ENCODE measurements at regions of chr4 and their contacts with region 1.

Region 1: GRCh38 chr4:179867300-179867878 is 2375.8 kb upstream of the TENM3 start:
- DNase-seq: peak; percentile 84
- H3K4me3 ChIP-seq: no peak overlapping the region
- H3K27ac ChIP-seq: no peak overlapping the region
- H3K4me1 ChIP-seq: no peaks in the 10 kb centered on the region
- H3K27me3 ChIP-seq: no peaks in the 10 kb centered on the region
- CTCF ChIP-seq: peak; percentile 94

Region 2: DNA sequence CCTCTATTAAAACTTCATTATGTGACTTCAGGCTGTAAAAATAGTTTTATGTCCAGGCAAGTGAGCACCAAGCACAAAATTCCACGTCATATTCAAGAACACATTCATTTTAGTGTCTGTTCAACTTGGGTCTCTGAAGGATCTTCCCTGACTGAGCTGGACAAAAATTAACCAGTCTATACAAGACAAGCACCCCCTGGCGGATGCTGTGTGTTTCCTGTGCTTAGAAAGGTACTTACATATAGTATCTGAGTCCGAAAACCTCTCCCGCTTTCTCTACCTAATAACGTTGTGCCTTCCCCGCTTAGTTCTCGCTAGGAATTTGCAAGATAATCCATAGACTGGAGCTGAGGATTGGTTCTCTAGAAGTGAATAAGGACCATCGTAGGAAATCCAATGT is 161.3 kb after region 1 on chr4:
- CTCF ChIA-PET with region 1: interaction called, 11 read pairs
- POLR2A ChIA-PET with region 1: no interaction called
- intact Hi-C with region 1: loop called (anchors 1 kb)
- DNase-seq: peak; percentile 76
- H3K4me3 ChIP-seq: no peak overlapping the region
- H3K27ac ChIP-seq: no peak overlapping the region
- H3K4me1 ChIP-seq: no peaks in the 10 kb centered on the region
- H3K27me3 ChIP-seq: no peaks in the 10 kb centered on the region
- CTCF ChIP-seq: peak; percentile 64

Region 3: DNA sequence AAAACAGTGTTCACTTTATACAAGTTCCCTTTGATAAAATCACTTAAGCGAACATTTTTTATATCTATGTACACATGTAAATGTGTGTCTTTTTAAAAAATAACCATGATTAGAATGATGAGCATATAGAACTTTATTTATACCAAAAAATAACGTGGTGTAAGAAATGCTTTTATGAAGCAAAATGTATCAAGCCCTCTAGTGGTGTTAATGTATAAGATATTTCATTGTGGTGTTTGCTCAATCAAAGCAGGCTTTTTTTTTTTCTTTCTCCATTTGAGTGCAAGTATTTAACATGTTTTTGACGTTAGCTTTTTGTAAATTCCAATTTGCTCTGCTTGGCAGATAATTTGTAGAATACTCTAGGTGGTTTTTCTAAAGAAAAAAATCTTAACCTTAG is 283.4 kb after region 1 on chr4:
- CTCF ChIA-PET with region 1: interaction called, 6 read pairs
- POLR2A ChIA-PET with region 1: no interaction called
- intact Hi-C with region 1: loop called (anchors 10 kb)
- DNase-seq: peak; percentile 45
- H3K4me3 ChIP-seq: no peak overlapping the region
- H3K27ac ChIP-seq: no peak overlapping the region
- H3K4me1 ChIP-seq: peaks cover 9% of the 10 kb centered on the region
- H3K27me3 ChIP-seq: no peaks in the 10 kb centered on the region
- CTCF ChIP-seq: peak; percentile 71

Region 4: GRCh38 chr4:181020456-181020855 is 1153.1 kb after region 1 on chr4:
- CTCF ChIA-PET with region 1: no interaction called
- POLR2A ChIA-PET with region 1: no interaction called
- intact Hi-C with region 1: no loop called
- DNase-seq: no peak
- H3K4me3 ChIP-seq: no peak overlapping the region
- H3K27ac ChIP-seq: no peak overlapping the region
- H3K4me1 ChIP-seq: no peaks in the 10 kb centered on the region
- H3K27me3 ChIP-seq: no peaks in the 10 kb centered on the region
- CTCF ChIP-seq: no peak